ENCODE measurements at regions of chr5 and their contacts with region 1.

Region 1: GRCh38 chr5:119411935-119412602 is 40.2 kb upstream of the HSD17B4 start:
- DNase-seq: peak; percentile 48
- ATAC-seq: peak; percentile 94
- H3K4me3 Mint-ChIP-seq: peak overlapping the region; percentile 86
- H3K27ac Mint-ChIP-seq: no peak overlapping the region; the same call in 1 of the 2 replicates
- H3K4me1 Mint-ChIP-seq: peaks cover 6% of the 10 kb centered on the region
- H3K27me3 Mint-ChIP-seq: no peaks in the 10 kb centered on the region
- CTCF ChIP-seq: peak; percentile 84

Region 2: GRCh38 chr5:118987988-118988865 is 423.8 kb before region 1 on chr5 and contains the start of gene DTWD2:
- CTCF ChIA-PET with region 1: interaction called, 42 read pairs
- POLR2A ChIA-PET with region 1: interaction called, 3 read pairs
- DNase-seq: peak; percentile 95
- ATAC-seq: peak; percentile 99
- H3K4me3 Mint-ChIP-seq: peak within 1 kb of the TSS; percentile 67
- H3K27ac Mint-ChIP-seq: peak within 1 kb of the TSS; percentile 53
- H3K4me1 Mint-ChIP-seq: peaks cover 14% of the 10 kb centered on the region
- H3K27me3 Mint-ChIP-seq: no peaks in the 10 kb centered on the region; the same call in 1 of the 2 replicates
- CTCF ChIP-seq: peak; percentile 85
- total RNA-seq, gene DTWD2: 10.3 to 13.1 TPM (median 10.4 TPM) in 3 replicates

Region 3: DNA sequence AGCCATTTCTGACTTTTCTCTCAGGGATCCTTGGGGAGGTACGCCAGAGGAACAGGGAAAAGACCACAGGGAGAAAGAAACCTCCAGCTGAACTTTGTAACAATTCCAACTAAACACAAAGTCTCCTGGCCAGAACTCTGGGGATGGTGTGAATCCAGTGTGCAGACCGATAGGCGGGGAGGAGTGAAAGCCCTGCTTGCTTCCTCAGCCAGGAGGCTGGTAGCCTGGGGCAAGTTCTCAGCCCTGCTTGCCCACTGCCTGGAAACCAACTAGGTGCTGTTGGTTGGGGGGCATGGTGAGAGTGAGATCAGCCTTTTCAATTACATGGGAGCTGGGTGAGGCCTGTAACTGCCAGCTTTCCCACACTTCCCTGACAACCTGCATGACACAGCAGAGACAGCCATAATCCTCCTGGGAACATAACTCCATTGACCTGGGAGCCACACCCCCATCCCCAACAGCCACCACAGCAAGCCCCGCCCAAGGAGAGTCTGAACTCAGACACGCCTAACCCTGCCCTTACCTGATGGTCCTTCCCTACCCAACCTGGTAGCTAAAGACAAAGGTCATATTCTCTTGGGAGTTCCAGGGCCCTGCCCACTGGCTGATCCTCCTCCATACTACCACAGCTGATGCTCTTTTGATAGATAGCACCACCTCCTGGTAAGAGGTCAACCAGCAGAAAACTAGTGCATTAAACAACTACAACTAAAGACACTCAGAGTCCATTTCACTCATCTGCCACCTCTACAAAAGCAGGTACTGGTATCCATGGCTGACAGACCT is 156.3 kb before region 1 on chr5:
- CTCF ChIA-PET with region 1: interaction called, 17 read pairs
- POLR2A ChIA-PET with region 1: no interaction called
- DNase-seq: peak; percentile 67
- ATAC-seq: peak; percentile 99
- H3K4me3 Mint-ChIP-seq: no peak overlapping the region
- H3K27ac Mint-ChIP-seq: peak overlapping the region; percentile 66
- H3K4me1 Mint-ChIP-seq: peaks cover 7% of the 10 kb centered on the region
- H3K27me3 Mint-ChIP-seq: no peaks in the 10 kb centered on the region; the same call in 1 of the 2 replicates
- CTCF ChIP-seq: no peak; the same call in 1 of the 2 replicates

Region 4: DNA sequence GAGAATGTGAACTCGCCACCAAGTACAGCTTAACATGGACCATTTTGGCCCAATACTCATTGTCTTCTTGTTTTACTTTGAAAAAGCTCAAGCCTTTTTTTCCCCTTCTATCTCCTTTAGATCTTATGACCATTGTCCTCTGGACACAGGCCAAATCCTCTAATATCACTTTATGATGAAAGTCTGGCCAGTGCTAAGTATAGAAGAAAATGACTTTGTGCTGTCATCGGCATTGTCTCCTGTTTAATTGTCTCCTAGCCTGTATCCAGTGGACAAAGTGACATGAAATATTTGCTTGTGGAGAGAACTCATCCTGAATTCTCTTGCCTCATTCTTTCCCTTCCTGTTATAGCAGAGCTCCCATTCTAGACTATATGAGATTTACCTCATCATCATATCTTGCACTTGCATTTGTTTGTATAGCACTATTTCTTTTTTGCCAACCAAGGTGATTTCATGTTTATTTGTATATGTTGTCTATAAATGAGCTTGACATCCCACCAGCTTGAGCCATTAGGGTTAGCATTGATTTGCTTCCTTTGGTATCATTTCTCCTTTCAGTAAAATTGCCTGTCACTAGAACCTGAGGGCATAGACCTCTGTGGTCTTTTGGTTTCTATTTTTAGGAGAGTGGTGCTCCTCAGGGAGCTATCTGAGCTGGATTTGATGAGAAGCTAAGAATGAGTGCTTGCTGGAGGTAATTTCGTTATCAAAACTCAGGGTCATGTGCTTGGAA is 75.1 kb before region 1 on chr5:
- CTCF ChIA-PET with region 1: interaction called, 13 read pairs
- POLR2A ChIA-PET with region 1: no interaction called
- DNase-seq: no peak
- ATAC-seq: no peak
- H3K4me3 Mint-ChIP-seq: no peak overlapping the region
- H3K27ac Mint-ChIP-seq: no peak overlapping the region
- H3K4me1 Mint-ChIP-seq: peaks cover 32% of the 10 kb centered on the region
- H3K27me3 Mint-ChIP-seq: no peaks in the 10 kb centered on the region
- CTCF ChIP-seq: no peak

Region 5: GRCh38 chr5:119355685-119356611 is 56.1 kb before region 1 on chr5 and contains the start of gene TNFAIP8:
- CTCF ChIA-PET with region 1: interaction called, 18 read pairs
- POLR2A ChIA-PET with region 1: no interaction called
- DNase-seq: peak; percentile 63
- ATAC-seq: peak; percentile 79
- H3K4me3 Mint-ChIP-seq: peak within 1 kb of the TSS; percentile 88
- H3K27ac Mint-ChIP-seq: peak within 1 kb of the TSS; percentile 83
- H3K4me1 Mint-ChIP-seq: peaks cover 82% of the 10 kb centered on the region
- H3K27me3 Mint-ChIP-seq: peaks cover 8% of the 10 kb centered on the region
- CTCF ChIP-seq: no peak
- total RNA-seq, gene TNFAIP8: 18.1 to 24.1 TPM (median 19.9 TPM) in 3 replicates

Region 6: DNA sequence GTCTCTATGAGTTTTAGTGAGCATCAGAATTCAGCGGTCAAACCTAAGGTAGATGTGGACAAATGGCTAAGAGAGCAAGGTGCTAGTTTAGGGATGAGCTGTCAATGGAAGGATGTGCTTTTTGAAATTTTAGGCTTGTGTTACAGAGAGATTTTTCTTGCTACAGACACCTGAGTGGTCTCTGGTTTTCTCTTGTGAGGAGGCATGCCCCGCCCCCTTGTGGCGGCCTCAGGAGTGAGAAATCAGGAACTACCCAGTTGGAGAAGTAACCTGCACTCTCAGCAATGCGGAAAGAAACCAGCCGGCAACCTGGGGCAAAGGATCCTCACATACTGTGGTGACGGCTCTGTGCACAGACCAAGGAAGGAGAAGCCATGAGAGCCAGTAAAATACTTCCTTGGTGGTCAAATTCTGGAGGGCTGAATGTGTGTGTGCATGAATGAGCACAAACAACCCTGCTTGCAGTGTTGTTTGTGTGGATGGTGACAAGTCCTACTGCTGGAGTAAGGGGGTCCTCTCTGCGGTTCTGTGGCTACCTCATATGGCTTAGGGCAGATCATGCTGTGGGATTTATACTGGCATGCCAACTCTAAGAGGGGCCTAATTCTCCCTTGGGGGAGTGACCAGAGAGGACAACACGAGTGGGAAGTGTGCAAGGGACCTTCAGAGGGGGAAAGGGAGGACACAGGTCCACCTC is 23.5 kb after region 1 on chr5:
- CTCF ChIA-PET with region 1: interaction called, 16 read pairs
- POLR2A ChIA-PET with region 1: no interaction called
- DNase-seq: peak; percentile 81
- ATAC-seq: peak; percentile 96
- H3K4me3 Mint-ChIP-seq: no peak overlapping the region
- H3K27ac Mint-ChIP-seq: no peak overlapping the region
- H3K4me1 Mint-ChIP-seq: peaks cover 8% of the 10 kb centered on the region; the same call in 1 of the 2 replicates
- H3K27me3 Mint-ChIP-seq: peaks cover 12% of the 10 kb centered on the region
- CTCF ChIP-seq: peak; percentile 55

Region 7: DNA sequence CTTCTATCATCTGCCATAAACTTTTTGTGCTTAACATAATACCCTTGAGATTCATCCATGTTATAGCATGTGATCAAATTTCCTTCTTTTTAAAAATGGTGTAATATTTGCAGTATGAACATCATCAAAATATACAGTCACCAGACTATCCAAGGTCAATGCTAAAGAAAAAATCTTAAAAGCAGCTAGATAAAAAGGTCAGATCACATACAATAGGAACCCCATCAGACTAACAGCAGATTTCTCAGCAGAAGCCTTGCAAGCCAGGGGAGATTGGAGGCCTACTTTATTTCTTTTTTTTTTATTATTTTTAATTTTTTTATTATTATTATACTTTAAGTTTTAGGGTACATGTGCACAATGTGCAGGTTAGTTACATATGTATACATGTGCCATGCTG is 254.5 kb after region 1 on chr5:
- CTCF ChIA-PET with region 1: no interaction called
- POLR2A ChIA-PET with region 1: no interaction called
- DNase-seq: no peak
- ATAC-seq: no peak
- H3K4me3 Mint-ChIP-seq: no peak overlapping the region
- H3K27ac Mint-ChIP-seq: no peak overlapping the region
- H3K4me1 Mint-ChIP-seq: peaks cover 12% of the 10 kb centered on the region
- H3K27me3 Mint-ChIP-seq: no peaks in the 10 kb centered on the region
- CTCF ChIP-seq: no peak